Naive thymus-derived CD4-positive, alpha-beta T cell (primary cell): ENCODE measurements at regions of chr12 and their contacts with region 1.

Region 1: DNA sequence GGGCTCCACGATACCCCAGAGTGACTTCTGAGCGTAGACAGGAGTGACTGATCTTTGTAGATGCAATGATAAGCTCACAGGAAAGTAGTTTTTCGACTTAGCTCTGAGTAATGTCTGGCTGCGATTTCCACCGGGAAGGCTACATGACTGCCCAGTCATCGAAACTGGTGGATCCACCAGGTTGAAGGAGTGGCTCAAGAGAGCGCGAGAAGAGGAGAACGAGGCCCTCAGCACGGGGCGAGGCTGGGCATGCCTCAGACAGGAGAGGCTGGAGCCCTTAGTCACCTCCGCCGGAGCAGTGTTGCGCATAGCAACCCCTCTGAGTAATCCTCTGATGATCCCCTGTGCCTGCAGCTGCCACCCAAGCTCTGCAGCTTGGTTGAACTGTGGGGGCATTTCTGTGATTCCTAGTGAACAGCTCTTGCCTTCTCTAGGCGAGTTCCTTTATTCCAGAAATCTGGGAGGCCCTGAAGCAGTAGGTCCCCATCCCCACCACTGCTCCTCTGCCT is 25.6 kb downstream of the ELK3 start:
- DNase-seq: no peak
- ATAC-seq: no peak
- H3K4me3 ChIP-seq: no peak overlapping the region
- H3K4me3 Mint-ChIP-seq: no peak overlapping the region
- H3K27ac ChIP-seq: no peak overlapping the region
- H3K27ac Mint-ChIP-seq: peak overlapping the region in 2 of 9 donors; percentile 20 to 51
- H3K4me1 ChIP-seq: peaks cover 6 to 7% of the 10 kb centered on the region in 2 donors
- H3K4me1 Mint-ChIP-seq: peaks cover 12 to 60% (median 40%) of the 10 kb centered on the region in 7 donors
- H3K27me3 ChIP-seq: no peaks in the 10 kb centered on the region
- H3K27me3 Mint-ChIP-seq: no peaks in the 10 kb centered on the region

Region 2: GRCh38 chr12:96132819-96133218 is 86.9 kb before region 1 on chr12:
- CTCF ChIA-PET with region 1: interaction called, 19 read pairs
- POLR2A ChIA-PET with region 1: no interaction called
- intact Hi-C with region 1: loop called (anchors 1 to 5 kb)
- DNase-seq: peak in 4 of 9 donors; percentile 9 to 33 (median 24)
- ATAC-seq: no peak
- H3K4me3 ChIP-seq: no peak overlapping the region
- H3K4me3 Mint-ChIP-seq: no peak overlapping the region
- H3K27ac ChIP-seq: no peak overlapping the region
- H3K27ac Mint-ChIP-seq: no peak overlapping the region
- H3K4me1 ChIP-seq: no peaks in the 10 kb centered on the region
- H3K4me1 Mint-ChIP-seq: peaks cover 2 to 14% (median 10%) of the 10 kb centered on the region in 7 donors
- H3K27me3 ChIP-seq: peaks cover 0 to 5% of the 10 kb centered on the region in 2 donors
- H3K27me3 Mint-ChIP-seq: peaks cover 0 to 17% (median 0%) of the 10 kb centered on the region in 5 donors

Region 3: DNA sequence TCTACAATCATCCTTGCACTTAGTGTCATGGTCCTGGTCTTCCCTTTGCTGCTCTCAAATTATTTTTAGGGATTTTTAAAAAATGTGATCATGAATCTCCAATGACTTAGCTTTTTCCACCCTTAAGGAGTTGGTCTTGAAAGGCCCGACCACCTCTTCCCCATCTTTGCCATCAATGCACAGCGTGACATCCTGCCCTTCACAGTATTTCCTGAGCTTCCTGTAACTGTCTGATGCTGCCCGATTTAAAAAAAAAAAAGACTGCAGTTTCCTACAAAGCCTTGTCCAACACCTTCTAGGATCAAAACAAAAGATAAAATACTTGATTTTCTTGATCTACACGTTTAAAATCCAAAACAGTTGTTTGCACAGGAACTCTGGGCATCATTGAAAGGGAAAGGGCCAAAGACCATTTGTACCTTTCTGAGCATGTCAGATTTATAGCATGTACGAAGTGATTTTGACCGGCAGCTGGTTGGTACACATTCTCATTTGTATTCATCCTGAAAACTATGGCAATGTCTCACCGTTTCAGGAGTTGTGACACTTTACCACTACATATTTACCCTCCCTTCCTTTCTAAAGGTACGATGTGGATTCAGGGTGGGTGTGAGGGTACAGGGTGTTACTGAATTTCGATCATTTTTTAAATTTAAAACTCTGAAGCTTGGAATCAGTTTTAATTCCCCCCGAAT is 33.0 kb before region 1 on chr12:
- CTCF ChIA-PET with region 1: interaction called, 12 read pairs
- POLR2A ChIA-PET with region 1: interaction called, 3 read pairs
- intact Hi-C with region 1: no loop called
- DNase-seq: no peak
- ATAC-seq: no peak
- H3K4me3 ChIP-seq: no peak overlapping the region
- H3K4me3 Mint-ChIP-seq: peak overlapping the region in 7 of 10 donors; percentile 1 to 37 (median 15)
- H3K27ac ChIP-seq: no peak overlapping the region
- H3K27ac Mint-ChIP-seq: peak overlapping the region in 6 of 9 donors; percentile 0 to 72 (median 40)
- H3K4me1 ChIP-seq: peaks cover 3 to 9% of the 10 kb centered on the region in 2 donors
- H3K4me1 Mint-ChIP-seq: peaks cover 7 to 25% (median 19%) of the 10 kb centered on the region in 7 donors
- H3K27me3 ChIP-seq: no peaks in the 10 kb centered on the region
- H3K27me3 Mint-ChIP-seq: no peaks in the 10 kb centered on the region

Region 4: GRCh38 chr12:96208801-96209549 is 10.8 kb before region 1 on chr12:
- CTCF ChIA-PET with region 1: interaction called, 11 read pairs
- POLR2A ChIA-PET with region 1: interaction called, 5 read pairs
- intact Hi-C with region 1: no loop called
- DNase-seq: no peak
- ATAC-seq: peak; percentile 15
- H3K4me3 ChIP-seq: no peak overlapping the region
- H3K4me3 Mint-ChIP-seq: peak overlapping the region; percentile 69 to 97 (median 85)
- H3K27ac ChIP-seq: peak overlapping the region; percentile 62
- H3K27ac Mint-ChIP-seq: peak overlapping the region; percentile 50 to 99 (median 96)
- H3K4me1 ChIP-seq: peaks cover 64 to 93% of the 10 kb centered on the region in 2 donors
- H3K4me1 Mint-ChIP-seq: peaks cover 70 to 100% (median 98%) of the 10 kb centered on the region in 7 donors
- H3K27me3 ChIP-seq: no peaks in the 10 kb centered on the region
- H3K27me3 Mint-ChIP-seq: no peaks in the 10 kb centered on the region